ENCODE measurements at regions of chr11 and their contacts with region 1.

Region 1: GRCh38 chr11:4636962-4637661 is at the start of gene OR51D1:
- DNase-seq: peak; percentile 80

Region 2: GRCh38 chr11:4514196-4514595 is 122.9 kb before region 1 on chr11:
- CTCF ChIA-PET with region 1: no interaction called
- POLR2A ChIA-PET with region 1: no interaction called
- DNase-seq: no peak

Region 3: DNA sequence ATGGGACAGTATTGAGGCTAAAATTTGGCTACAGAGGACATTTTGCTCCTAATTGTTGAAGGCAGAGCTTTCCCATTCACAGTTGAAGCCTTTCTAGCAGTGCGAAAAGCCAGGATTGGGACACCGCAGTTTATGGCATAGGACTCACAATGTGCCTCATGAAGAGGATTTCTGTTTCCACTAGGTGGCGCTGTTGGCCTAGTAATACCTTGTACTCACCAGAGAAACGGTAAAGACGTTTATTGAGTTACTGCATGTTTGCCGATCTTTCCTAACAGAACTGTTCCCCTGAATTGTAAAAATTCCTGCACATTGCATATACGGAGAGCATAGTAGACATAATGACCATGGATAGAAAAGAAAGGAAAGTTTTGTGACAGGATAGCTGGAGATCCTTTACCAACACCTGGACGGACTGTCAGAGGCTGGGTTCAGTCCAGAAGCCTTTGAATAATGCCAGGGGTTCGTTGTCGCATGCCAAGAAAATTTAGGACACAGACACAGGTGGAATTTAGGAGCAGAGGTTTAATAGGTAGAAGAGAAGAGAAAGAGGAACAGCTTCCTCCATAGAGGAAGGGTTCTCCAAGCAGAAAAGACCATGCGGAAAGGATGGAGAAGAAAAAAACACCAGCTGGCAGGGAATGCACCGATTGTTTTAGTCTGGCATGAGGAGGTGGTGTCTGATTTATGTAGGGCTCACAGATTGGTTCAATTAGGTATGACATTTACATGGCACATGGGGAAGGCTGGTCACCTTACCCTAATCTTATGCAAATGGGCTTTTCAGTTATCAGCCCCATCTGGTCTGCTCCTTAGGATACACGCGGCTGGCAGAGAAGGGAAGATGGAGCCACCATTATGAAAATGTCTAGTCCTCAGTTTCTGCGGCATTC is 10.7 kb before region 1 on chr11:
- CTCF ChIA-PET with region 1: interaction called, 15 read pairs
- POLR2A ChIA-PET with region 1: no interaction called
- DNase-seq: peak; percentile 42

Region 4: GRCh38 chr11:4658629-4659445 is 21.7 kb after region 1 on chr11:
- CTCF ChIA-PET with region 1: no interaction called
- POLR2A ChIA-PET with region 1: no interaction called
- DNase-seq: no peak